Activated T-helper 2 cell treated with anti-CD3 and anti-CD28 coated beads, Interferon-gamma antibody, Interleukin-2, Interleukin-4, amounts not matched to agents 10 μg/mL and 5 μg/mL and 100 μg/mL, durations not matched to agents 14 hours and 24 hours and 36 hours (primary cell): ENCODE measurements at regions of chr12 and their contacts with region 1.

Region 1: DNA sequence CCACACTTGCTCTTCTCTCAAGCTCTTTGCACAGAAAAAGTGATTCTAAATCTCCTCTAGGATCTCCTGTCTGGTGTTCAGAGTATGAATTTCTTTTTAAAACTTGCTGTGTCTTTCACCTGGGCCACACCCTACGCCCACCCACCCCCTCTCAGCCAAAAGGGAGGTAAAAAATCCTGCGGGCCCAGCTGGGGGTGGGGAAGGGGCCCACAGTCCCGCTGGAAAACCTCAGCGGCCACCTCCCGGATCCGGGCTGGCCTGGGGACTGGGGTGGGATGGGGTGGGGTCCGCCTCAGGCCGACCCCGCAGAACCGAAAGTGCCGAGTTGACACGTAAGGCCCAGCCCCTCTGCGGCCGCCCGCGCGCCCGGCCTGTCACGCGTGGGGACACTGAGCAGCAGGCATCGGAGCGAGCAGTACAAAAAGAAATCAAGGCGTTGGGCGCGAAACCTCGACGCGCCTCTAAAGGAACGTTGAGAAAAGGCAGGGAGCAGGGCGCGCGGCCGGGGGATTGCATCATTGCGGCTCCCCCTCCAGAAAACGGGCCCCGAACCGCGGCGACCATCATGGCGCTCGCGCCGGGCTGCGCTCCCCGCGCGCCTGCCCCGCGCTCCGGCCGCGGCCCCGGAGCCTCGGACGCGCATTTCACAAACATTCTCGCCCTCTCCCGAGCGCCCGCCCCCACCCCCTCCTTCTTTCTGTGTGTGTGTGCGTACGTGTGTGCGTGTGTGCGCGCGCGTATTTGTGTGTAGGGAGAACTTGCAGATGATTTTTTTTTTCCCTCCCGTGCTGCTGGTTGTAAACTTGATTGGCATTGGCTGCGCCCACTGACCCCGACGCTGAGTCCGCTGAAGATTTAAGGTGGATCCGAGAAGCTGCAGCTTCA is 7.7 kb downstream of the CDKN1B start:
- DNase-seq: peak; percentile 90
- H3K4me3 Mint-ChIP-seq: peak overlapping the region; percentile 88
- H3K27ac Mint-ChIP-seq: peak overlapping the region; percentile 96
- H3K4me1 Mint-ChIP-seq: peaks cover 42% of the 10 kb centered on the region
- H3K27me3 Mint-ChIP-seq: no peaks in the 10 kb centered on the region

Region 2: DNA sequence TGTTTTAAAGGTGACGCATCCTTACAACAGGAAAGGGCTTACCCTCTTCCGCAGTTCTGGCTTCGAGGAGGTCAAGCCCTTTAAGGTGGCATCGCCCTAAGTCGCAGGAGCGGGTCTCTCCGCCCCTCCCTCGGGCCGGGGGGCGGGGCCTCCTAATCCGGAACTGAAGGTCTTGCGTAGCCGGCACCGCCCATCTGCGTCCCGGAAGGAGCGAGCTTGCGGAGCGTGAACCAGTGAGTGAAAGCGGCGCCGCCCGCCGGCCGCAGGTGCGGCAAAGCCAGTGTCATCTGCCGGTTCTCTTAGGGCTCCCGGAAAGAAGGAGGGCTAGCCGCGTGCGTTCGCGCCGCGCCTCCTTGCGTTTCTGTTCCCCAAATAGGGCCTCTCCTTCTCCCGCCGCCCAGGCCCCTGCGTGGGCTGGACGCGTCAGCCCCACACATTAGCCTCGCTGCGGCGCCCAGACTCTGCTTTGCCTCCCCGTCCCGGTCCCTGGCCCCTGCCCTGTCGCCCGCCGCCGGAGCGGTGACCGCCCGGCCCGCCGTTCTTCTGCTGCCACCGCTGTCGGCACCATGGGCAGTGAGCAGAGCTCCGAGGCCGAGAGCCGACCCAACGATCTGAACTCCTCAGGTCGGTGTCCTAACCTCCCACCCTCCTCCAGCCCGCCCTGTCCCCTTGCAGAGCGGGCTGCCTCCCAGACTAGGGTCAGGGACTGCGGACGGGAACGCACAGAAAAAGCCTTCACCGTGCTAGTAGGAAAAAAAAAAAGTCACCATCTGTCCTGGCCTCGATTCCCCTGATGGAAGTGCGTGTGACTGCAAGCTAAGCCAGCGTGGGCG is 367.8 kb before region 1 on chr12 and contains the start of gene BORCS5:
- intact Hi-C with region 1: loop called (anchors 1 kb)
- DNase-seq: peak; percentile 98
- H3K4me3 Mint-ChIP-seq: peak within 1 kb of the TSS; percentile 96
- H3K27ac Mint-ChIP-seq: peak within 1 kb of the TSS; percentile 99
- H3K4me1 Mint-ChIP-seq: peaks cover 41% of the 10 kb centered on the region
- H3K27me3 Mint-ChIP-seq: no peaks in the 10 kb centered on the region
- total RNA-seq, gene BORCS5: 41.8 and 45.9 TPM in 2 replicates

Region 3: DNA sequence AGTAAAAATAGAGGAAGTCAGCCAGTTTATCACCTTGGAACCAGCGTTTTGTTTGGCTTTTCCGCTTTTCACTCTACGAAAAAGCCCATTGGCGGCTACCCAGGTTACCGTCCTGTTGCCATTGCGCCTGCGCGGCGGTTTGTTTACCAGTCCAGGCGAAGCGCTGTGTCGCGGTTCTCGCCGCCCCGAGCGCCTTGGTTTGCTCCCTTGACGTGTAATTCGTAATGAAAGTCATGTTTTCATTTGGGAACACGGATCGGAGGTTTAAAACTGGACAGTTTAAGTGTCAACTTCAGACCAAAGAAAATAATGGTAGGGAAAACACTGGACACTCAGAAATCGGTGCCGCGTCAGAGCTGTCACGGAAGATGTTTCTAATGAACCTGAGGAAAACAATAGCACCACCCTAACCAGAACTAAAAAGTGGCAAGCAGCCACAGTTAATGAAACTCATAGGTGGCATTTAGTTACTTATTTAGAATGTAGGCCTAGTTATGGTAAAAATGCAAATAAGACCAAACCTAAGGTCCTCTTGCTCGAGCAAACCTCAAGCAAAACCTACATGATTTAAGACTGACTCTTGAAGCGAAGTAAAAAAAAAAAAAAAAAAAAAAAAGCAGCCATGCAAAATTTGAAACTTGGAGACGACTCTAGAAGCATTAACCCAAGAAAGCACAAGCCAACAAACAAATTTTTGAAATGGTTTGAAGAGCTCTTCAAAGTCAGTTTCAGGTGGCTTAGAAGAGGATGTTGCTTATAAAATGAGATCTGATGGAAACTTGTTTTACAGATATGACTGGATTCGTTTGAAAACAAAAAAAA is 28.1 kb before region 1 on chr12:
- intact Hi-C with region 1: loop called (anchors 2 kb)
- DNase-seq: peak; percentile 90
- H3K4me3 Mint-ChIP-seq: peak overlapping the region; percentile 97
- H3K27ac Mint-ChIP-seq: peak overlapping the region; percentile 99
- H3K4me1 Mint-ChIP-seq: peaks cover 58% of the 10 kb centered on the region
- H3K27me3 Mint-ChIP-seq: no peaks in the 10 kb centered on the region

Region 4: GRCh38 chr12:12736759-12737676 is 12.1 kb after region 1 on chr12:
- intact Hi-C with region 1: loop called (anchors 1 kb)
- DNase-seq: peak; percentile 61
- H3K4me3 Mint-ChIP-seq: peak overlapping the region; percentile 61
- H3K27ac Mint-ChIP-seq: peak overlapping the region; percentile 92
- H3K4me1 Mint-ChIP-seq: peaks cover 54% of the 10 kb centered on the region
- H3K27me3 Mint-ChIP-seq: no peaks in the 10 kb centered on the region

Region 5: GRCh38 chr12:12813120-12814101 is 88.5 kb after region 1 on chr12 and contains the start of gene DDX47:
- intact Hi-C with region 1: loop called (anchors 5 kb)
- DNase-seq: peak; percentile 93
- H3K4me3 Mint-ChIP-seq: peak within 1 kb of the TSS; percentile 90
- H3K27ac Mint-ChIP-seq: peak within 1 kb of the TSS; percentile 92
- H3K4me1 Mint-ChIP-seq: peaks cover 43% of the 10 kb centered on the region
- H3K27me3 Mint-ChIP-seq: no peaks in the 10 kb centered on the region
- total RNA-seq, gene DDX47: 114 and 120 TPM in 2 replicates

Region 6: DNA sequence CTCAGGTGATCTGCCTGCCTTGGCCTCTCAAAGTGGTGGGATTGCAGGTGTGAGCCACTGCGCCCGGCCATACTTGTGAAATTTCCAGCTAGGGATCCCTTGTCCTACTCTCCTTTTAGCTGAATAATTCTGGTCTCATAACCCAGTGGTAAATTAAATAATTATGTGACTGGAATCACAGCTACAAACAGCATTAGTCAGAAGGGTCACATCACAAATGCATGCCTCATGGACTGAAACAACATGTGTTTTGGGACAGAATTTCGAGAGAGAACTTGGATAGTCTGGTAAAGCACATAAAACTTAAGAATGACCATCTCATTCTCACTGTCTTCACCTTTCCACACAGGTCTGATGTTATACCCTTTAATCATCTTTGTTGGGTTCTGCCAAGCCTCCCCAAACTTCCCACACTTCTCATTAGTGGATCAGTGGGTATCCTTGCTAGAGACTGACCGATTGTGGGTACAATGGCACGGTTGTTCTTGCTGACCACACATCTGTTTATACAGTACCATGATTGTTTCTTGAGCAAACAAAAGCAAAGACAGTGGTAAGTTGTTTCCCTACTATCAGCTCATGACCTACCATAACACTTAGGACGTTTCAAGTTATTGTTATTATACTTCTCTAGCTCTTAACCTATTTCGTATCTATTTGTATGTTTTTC is 221.9 kb after region 1 on chr12:
- intact Hi-C with region 1: no loop called
- DNase-seq: no peak
- H3K4me3 Mint-ChIP-seq: no peak overlapping the region
- H3K27ac Mint-ChIP-seq: no peak overlapping the region
- H3K4me1 Mint-ChIP-seq: peaks cover 4% of the 10 kb centered on the region
- H3K27me3 Mint-ChIP-seq: peaks cover 7% of the 10 kb centered on the region

Region 7: GRCh38 chr12:14394317-14395073 is 1669.6 kb after region 1 on chr12:
- intact Hi-C with region 1: loop called (anchors 5 kb)
- DNase-seq: peak; percentile 42
- H3K4me3 Mint-ChIP-seq: peak overlapping the region; percentile 89
- H3K27ac Mint-ChIP-seq: peak overlapping the region; percentile 92
- H3K4me1 Mint-ChIP-seq: peaks cover 67% of the 10 kb centered on the region
- H3K27me3 Mint-ChIP-seq: no peaks in the 10 kb centered on the region